ENCODE measurements at regions of chr7 and their contacts with region 1.

Region 1: GRCh38 chr7:50467817-50468610 is 17.9 kb upstream of the FIGNL1 start:
- DNase-seq: peak; percentile 61 to 79 (median 76)
- ATAC-seq: peak; percentile 97
- H3K4me3 ChIP-seq: peak overlapping the region; percentile 12
- H3K4me3 Mint-ChIP-seq: peak overlapping the region; percentile 12 to 80 (median 70)
- H3K27ac ChIP-seq: no peak overlapping the region
- H3K27ac Mint-ChIP-seq: peak overlapping the region in 7 of 9 donors; percentile 35 to 88 (median 62)
- H3K4me1 ChIP-seq: no peaks in the 10 kb centered on the region
- H3K4me1 Mint-ChIP-seq: peaks cover 8 to 14% (median 11%) of the 10 kb centered on the region in 7 donors
- H3K27me3 ChIP-seq: no peaks in the 10 kb centered on the region
- H3K27me3 Mint-ChIP-seq: peaks cover 0 to 21% (median 0%) of the 10 kb centered on the region in 5 donors

Region 2: DNA sequence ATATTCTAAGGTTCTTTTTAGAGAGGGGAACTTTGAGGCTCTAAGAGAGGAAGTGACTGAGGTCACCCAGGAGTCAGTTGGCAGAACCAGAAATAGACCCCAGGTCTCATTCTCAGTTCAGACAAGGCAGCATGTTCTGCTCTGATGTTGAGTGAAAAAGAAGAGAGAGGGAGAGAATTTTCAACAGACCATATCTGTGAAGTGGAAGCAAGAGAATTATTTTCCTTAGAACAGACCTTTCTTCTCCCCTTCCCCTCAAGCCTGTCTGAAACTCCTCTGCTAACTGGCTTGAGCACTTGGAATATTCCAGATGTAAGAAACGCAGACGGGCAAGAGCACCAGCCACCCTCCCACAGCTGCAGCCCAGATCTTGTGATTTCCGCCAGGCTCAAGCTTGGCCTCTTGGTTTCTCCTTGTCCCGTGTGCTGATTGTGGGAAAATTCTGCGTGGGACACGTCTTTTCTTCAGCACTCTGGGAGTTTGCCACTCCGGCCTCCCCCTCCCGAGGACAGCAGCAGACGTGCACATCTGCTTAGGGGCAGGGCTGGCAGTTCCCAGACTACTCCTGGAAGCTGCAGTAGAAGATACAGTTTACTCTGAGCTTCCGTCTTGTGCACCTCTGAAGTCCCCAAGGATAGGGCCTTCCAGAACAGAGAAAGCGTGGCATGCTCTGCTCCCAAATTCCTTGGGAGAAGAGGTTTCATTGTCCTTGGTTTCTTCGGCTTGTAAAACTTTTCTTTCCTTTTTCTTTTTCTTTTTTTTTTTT is 186.2 kb before region 1 on chr7:
- CTCF ChIA-PET with region 1: no interaction called
- POLR2A ChIA-PET with region 1: no interaction called
- intact Hi-C with region 1: no loop called
- DNase-seq: peak in 1 of 9 donors; percentile 34
- ATAC-seq: peak; percentile 83
- H3K4me3 ChIP-seq: peak overlapping the region; percentile 32
- H3K4me3 Mint-ChIP-seq: peak overlapping the region; percentile 65 to 84 (median 75)
- H3K27ac ChIP-seq: peak overlapping the region; percentile 67
- H3K27ac Mint-ChIP-seq: peak overlapping the region; percentile 61 to 95 (median 91)
- H3K4me1 ChIP-seq: peaks cover 19 to 29% of the 10 kb centered on the region in 2 donors
- H3K4me1 Mint-ChIP-seq: peaks cover 31 to 75% (median 66%) of the 10 kb centered on the region in 7 donors
- H3K27me3 ChIP-seq: no peaks in the 10 kb centered on the region
- H3K27me3 Mint-ChIP-seq: no peaks in the 10 kb centered on the region

Region 3: DNA sequence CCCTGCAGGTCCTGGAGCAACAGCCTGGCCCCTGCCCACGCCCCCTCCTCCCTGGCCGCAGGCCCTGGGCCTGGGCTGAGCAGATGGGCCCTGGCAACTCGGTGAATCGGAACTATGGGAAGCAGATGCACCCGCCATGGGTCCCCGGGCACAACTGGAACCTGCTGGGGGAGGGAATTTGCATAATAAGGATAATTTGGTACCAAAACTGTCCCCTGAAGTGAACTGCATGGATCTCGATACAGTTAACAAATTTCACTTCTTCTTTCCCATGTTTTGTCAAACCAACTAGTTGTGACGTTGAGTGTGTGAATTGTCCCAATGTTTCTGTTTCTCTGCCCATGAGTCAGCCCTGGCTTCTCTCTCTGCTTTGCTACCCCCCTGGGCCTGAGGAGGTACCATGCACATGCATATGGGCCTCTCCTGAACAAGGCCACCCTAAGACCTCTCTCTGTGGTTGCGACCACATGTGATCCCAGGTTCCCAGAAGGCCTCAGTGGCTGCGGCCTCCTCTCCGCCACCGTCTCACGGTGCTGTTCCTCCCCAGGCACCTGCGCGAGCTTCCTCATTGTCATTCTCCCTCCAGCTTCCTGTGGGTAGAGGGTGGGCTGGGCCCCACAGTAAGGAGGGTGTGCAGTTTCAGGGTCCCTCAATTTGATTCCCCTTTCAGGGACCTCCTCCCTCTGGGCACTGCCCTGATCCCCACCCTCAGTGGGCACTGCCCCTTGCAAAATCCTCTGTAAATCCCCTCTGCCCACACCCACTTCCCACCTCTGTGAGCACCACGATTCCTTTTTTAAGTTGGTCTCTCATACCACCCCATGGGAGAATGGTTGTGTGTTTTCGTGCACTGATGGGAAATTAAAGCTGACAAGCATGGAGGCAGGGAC is 57.9 kb before region 1 on chr7:
- CTCF ChIA-PET with region 1: no interaction called
- POLR2A ChIA-PET with region 1: no interaction called
- intact Hi-C with region 1: no loop called
- DNase-seq: no peak
- ATAC-seq: peak; percentile 72
- H3K4me3 ChIP-seq: no peak overlapping the region
- H3K4me3 Mint-ChIP-seq: peak overlapping the region in 8 of 10 donors; percentile 7 to 73 (median 54)
- H3K27ac ChIP-seq: no peak overlapping the region
- H3K27ac Mint-ChIP-seq: peak overlapping the region; percentile 34 to 85 (median 74)
- H3K4me1 ChIP-seq: peaks cover 0 to 12% of the 10 kb centered on the region in 2 donors
- H3K4me1 Mint-ChIP-seq: peaks cover 45 to 69% (median 64%) of the 10 kb centered on the region in 7 donors
- H3K27me3 ChIP-seq: no peaks in the 10 kb centered on the region
- H3K27me3 Mint-ChIP-seq: no peaks in the 10 kb centered on the region

Region 4: DNA sequence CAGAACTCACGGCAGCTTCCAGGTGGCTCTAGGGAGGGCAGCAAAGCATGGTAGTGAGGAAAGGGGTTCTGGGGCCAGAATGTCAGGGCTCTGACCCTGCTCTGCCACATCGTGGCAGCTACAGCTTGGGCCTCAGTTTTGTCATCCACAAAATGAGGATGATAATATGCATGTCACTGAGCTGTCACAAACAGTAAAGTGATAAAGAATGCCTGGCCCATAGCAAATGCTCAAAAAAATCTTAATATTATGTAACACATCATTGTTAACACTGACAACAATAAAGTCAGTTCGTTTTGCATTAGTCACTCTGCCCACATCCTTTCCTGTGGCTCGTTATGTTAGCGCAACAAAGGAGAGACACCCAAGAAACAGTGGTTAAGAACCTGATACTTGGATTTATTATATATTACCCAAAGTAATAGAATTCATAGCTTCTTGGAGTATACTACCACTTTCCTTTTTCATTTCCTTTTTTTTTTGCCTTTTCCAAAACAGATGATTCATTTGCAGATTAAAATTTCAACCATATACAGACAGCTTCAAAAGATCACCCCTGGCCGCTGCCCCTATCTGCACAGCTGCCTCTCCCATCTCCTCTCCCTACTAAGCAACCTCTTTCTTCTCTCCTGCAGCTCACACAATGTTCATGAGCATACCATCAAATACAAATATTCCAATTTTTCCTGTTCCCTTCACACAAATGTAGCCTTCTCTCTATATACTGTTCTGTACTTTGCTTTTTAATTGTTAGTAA is 142.7 kb after region 1 on chr7:
- CTCF ChIA-PET with region 1: no interaction called
- POLR2A ChIA-PET with region 1: no interaction called
- intact Hi-C with region 1: loop called (anchors 5 kb)
- DNase-seq: peak in 7 of 9 donors; percentile 12 to 54 (median 39)
- ATAC-seq: peak; percentile 83
- H3K4me3 ChIP-seq: no peak overlapping the region
- H3K4me3 Mint-ChIP-seq: peak overlapping the region in 7 of 10 donors; percentile 5 to 72 (median 31)
- H3K27ac ChIP-seq: no peak overlapping the region
- H3K27ac Mint-ChIP-seq: peak overlapping the region; percentile 7 to 88 (median 38)
- H3K4me1 ChIP-seq: peaks cover 14 to 41% of the 10 kb centered on the region in 2 donors
- H3K4me1 Mint-ChIP-seq: peaks cover 31 to 51% (median 36%) of the 10 kb centered on the region in 7 donors
- H3K27me3 ChIP-seq: no peaks in the 10 kb centered on the region
- H3K27me3 Mint-ChIP-seq: peaks cover 0 to 36% (median 0%) of the 10 kb centered on the region in 5 donors

Region 5: DNA sequence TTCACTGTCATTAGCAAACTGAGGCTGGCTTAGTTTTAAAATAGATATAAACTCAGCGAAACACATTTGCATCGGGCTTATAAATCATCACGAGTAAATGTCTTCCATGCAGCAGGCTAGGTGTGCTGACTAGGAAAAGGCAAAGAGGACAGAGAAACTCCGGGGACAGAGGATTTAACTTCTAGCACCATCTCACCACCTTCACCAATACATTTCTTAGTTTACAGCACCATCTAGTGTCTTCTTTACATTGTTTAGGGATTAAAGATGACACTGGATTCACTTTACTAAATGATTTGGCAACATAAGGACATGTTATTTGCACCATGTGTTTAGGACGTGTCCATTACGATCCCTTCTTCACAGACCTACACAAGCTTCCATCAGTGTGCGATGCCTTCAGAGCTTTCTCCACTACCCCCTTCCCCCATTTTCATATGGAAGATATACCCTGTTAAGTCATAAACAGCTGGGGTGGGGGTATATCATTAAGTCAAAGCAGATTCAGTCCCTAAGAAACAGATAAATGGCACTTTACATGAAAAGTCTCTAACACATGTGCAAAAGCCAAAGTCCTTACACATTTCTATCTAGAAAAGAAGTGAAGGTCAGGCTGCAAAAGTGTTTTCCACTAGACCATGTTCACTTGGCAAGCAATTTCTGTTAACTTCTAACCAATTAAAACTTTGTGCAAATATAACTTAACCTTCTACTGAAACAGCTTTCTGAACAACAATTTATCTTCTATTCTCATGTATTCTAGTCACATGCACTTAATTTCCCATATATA is 211.4 kb after region 1 on chr7:
- CTCF ChIA-PET with region 1: interaction called, 36 read pairs
- POLR2A ChIA-PET with region 1: interaction called, 5 read pairs
- intact Hi-C with region 1: loop called (anchors 1 kb)
- DNase-seq: peak in 6 of 9 donors; percentile 27 to 59 (median 54)
- ATAC-seq: peak; percentile 73
- H3K4me3 ChIP-seq: no peak overlapping the region
- H3K4me3 Mint-ChIP-seq: no peak overlapping the region
- H3K27ac ChIP-seq: no peak overlapping the region
- H3K27ac Mint-ChIP-seq: no peak overlapping the region
- H3K4me1 ChIP-seq: no peaks in the 10 kb centered on the region
- H3K4me1 Mint-ChIP-seq: peaks cover 0 to 5% (median 0%) of the 10 kb centered on the region in 7 donors
- H3K27me3 ChIP-seq: no peaks in the 10 kb centered on the region
- H3K27me3 Mint-ChIP-seq: peaks cover 0 to 22% (median 0%) of the 10 kb centered on the region in 5 donors

Region 6: GRCh38 chr7:51141451-51142003 is 673.5 kb after region 1 on chr7:
- CTCF ChIA-PET with region 1: no interaction called
- POLR2A ChIA-PET with region 1: no interaction called
- intact Hi-C with region 1: loop called (anchors 1 kb)
- DNase-seq: peak in 4 of 9 donors; percentile 16 to 39 (median 26)
- ATAC-seq: peak; percentile 24
- H3K4me3 ChIP-seq: no peak overlapping the region
- H3K4me3 Mint-ChIP-seq: no peak overlapping the region
- H3K27ac ChIP-seq: no peak overlapping the region
- H3K27ac Mint-ChIP-seq: no peak overlapping the region
- H3K4me1 ChIP-seq: no peaks in the 10 kb centered on the region
- H3K4me1 Mint-ChIP-seq: peaks cover 0 to 17% (median 4%) of the 10 kb centered on the region in 7 donors
- H3K27me3 ChIP-seq: no peaks in the 10 kb centered on the region
- H3K27me3 Mint-ChIP-seq: peaks cover 0 to 10% (median 5%) of the 10 kb centered on the region in 5 donors

Region 7: DNA sequence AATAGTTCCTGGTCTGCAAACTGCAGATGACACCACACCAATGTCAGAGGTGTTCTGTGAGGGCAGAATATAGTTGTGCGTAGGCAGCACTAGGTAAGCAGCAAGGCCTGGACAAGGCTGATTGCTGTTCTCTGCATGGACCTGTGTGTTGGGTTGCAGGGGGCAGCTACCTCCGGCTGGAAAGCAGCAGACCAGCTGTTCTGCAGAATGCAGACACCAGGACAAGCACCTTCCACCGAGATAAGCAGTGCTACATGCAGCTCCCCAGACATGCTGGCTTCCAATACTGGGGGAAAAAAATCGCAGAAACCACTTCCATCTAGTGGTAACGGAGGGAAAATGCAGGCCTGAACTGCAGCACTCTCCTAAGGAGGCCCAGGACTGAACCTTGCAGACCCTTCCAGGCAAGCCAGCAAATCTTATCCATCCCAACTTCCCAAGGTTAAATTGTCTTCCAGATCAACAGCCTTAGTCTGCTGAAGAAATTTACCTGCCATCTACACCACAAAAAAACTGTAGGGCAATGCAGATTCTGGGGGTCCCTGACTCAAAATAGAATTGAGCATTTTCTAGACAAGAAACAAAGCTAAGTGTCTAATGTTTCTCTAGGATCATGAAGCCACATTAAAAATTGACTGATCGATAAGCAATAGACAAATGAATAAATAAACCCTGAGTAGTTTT is 899.1 kb after region 1 on chr7:
- CTCF ChIA-PET with region 1: no interaction called
- POLR2A ChIA-PET with region 1: no interaction called
- intact Hi-C with region 1: loop called in 1 of 2 experiments (anchors 5 kb)
- DNase-seq: peak in 1 of 9 donors; percentile 12
- ATAC-seq: no peak
- H3K4me3 ChIP-seq: no peak overlapping the region
- H3K4me3 Mint-ChIP-seq: no peak overlapping the region
- H3K27ac ChIP-seq: no peak overlapping the region
- H3K27ac Mint-ChIP-seq: no peak overlapping the region
- H3K4me1 ChIP-seq: no peaks in the 10 kb centered on the region
- H3K4me1 Mint-ChIP-seq: no peaks in the 10 kb centered on the region
- H3K27me3 ChIP-seq: no peaks in the 10 kb centered on the region
- H3K27me3 Mint-ChIP-seq: peaks cover 0 to 6% (median 0%) of the 10 kb centered on the region in 5 donors

Measured in naive thymus-derived CD4-positive, alpha-beta T cell (primary cell).